Activated CD4-positive, alpha-beta memory T cell treated with anti-CD3 and anti-CD28 coated beads for 36 hours (primary cell): ENCODE measurements at regions of chr17 and their contacts with region 1.

Region 1: DNA sequence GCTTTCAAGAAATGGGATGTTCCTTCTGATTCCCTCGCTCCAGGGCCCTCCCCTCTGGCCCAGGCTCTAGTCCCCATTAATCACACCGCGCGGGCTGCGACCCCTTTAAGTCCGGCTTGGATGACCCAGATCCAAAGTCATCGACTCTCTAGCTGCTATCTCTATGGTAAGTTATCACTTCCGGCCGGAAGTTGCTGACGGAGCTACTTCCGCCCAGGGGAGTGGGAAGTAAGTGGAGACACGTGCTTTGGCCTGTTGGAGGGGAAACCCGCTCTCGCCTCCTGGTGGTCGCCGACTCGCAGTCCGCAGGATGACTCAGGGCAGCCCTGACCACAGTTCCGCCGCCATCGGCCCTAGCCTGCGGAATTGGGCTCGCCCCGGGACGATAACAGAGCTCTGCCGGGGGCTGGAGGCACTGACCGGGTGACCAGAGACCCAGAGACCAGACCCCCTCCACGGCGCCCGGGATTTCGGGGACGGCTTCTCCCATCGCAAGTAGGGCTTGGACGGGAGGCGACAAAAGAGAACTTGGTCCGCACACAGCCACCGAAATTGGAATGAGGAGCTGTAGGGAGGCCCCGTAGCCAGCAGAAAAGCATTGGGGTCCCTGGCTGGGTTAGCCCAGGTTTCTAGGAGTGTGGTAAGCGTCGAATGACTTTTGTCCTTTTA is 52.2 kb upstream of the SEC14L1 start:
- DNase-seq: peak; percentile 92
- H3K4me3 Mint-ChIP-seq: peak overlapping the region; percentile 89
- H3K27ac Mint-ChIP-seq: peak overlapping the region; percentile 94
- H3K4me1 Mint-ChIP-seq: peaks cover 53% of the 10 kb centered on the region
- H3K27me3 Mint-ChIP-seq: no peaks in the 10 kb centered on the region

Region 2: GRCh38 chr17:77127735-77128361 is 39.3 kb after region 1 on chr17:
- CTCF ChIA-PET with region 1: interaction called, 5 read pairs
- POLR2A ChIA-PET with region 1: interaction called, 6 read pairs
- intact Hi-C with region 1: loop called (anchors 1 kb)
- DNase-seq: peak; percentile 87
- H3K4me3 Mint-ChIP-seq: peak overlapping the region; percentile 55
- H3K27ac Mint-ChIP-seq: peak overlapping the region; percentile 91
- H3K4me1 Mint-ChIP-seq: peaks cover 28% of the 10 kb centered on the region
- H3K27me3 Mint-ChIP-seq: no peaks in the 10 kb centered on the region

Region 3: GRCh38 chr17:77186141-77186604 is 97.6 kb after region 1 on chr17:
- CTCF ChIA-PET with region 1: interaction called, 5 read pairs
- POLR2A ChIA-PET with region 1: no interaction called
- intact Hi-C with region 1: loop called (anchors 5 kb)
- DNase-seq: peak; percentile 34
- H3K4me3 Mint-ChIP-seq: no peak overlapping the region
- H3K27ac Mint-ChIP-seq: no peak overlapping the region
- H3K4me1 Mint-ChIP-seq: peaks cover 48% of the 10 kb centered on the region
- H3K27me3 Mint-ChIP-seq: no peaks in the 10 kb centered on the region

Region 4: DNA sequence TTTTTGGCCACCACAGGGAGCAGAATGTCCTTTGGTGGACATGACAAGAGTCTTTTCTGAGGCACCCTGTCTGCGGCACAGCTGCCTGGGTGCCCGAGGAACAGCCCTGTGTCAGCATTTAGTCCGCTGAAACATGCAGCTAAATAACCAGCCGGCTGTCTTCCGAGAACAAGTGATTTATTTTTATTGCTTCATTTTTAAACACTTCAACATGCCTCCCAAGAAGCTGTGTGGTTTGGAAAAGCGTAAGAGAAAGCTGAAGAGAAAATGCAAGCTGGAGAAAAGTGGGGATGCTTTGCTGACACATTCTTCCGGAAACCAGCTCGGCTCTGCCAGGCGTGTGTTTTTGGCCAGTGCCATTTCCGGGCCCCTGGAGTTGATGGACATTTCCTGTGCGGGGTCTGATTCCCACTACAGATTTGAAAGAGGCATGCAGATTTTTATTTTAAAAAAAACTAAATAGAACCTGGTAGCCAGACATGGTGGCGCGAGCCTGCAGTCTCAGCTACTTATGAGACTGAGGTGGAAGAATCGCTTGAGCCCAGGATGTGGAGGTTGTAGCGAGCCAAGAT is 146.9 kb after region 1 on chr17:
- CTCF ChIA-PET with region 1: interaction called, 18 read pairs
- POLR2A ChIA-PET with region 1: interaction called, 4 read pairs
- intact Hi-C with region 1: no loop called
- DNase-seq: peak; percentile 66
- H3K4me3 Mint-ChIP-seq: peak overlapping the region; percentile 59
- H3K27ac Mint-ChIP-seq: peak overlapping the region; percentile 66
- H3K4me1 Mint-ChIP-seq: peaks cover 19% of the 10 kb centered on the region
- H3K27me3 Mint-ChIP-seq: no peaks in the 10 kb centered on the region

Region 5: GRCh38 chr17:77247048-77247541 is 158.5 kb after region 1 on chr17:
- CTCF ChIA-PET with region 1: interaction called, 38 read pairs
- POLR2A ChIA-PET with region 1: no interaction called
- intact Hi-C with region 1: loop called (anchors 1 kb)
- DNase-seq: peak; percentile 88
- H3K4me3 Mint-ChIP-seq: peak overlapping the region; percentile 50
- H3K27ac Mint-ChIP-seq: no peak overlapping the region
- H3K4me1 Mint-ChIP-seq: peaks cover 9% of the 10 kb centered on the region
- H3K27me3 Mint-ChIP-seq: peaks cover 14% of the 10 kb centered on the region

Region 6: DNA sequence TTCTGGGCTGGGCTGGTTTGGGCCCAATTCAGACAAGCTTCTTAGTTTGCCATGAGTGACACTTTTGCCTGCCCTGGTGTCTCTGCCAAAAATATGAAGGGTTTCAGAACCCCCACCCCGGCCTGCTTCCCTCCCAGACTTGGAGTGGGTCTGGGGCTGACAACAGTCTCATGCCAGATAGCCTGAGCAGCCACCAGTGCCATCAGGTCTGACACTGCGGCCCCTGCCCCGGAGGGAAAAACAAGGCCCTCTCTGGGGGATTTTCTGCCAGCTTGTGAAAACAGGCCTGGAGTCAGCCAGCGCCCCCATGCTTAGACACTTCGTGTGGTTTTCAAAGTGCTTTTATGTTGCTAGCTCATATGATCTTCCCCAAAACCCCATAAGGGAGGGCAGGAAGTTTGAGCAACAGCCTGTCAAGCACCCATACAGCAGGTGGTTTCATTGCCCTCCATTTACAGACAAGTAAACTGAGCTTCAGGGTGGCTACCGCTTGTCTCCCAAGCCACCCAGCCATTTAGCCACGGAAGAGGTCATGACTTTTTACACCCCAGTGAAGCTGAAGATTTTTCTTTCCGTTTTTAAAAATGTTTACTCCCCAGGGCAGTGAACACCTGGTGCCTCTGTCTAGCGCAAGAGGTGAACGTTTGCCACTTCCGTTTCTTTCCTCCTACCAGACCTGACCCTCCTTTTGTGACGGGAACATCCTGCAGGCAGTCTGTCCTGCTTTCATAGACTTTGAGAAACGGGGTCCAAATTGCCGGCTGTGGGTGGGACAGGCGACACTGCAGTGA is 352.7 kb after region 1 on chr17:
- CTCF ChIA-PET with region 1: no interaction called
- POLR2A ChIA-PET with region 1: no interaction called
- intact Hi-C with region 1: no loop called
- DNase-seq: peak; percentile 85
- H3K4me3 Mint-ChIP-seq: peak overlapping the region; percentile 65
- H3K27ac Mint-ChIP-seq: peak overlapping the region; percentile 98
- H3K4me1 Mint-ChIP-seq: peaks cover 97% of the 10 kb centered on the region
- H3K27me3 Mint-ChIP-seq: no peaks in the 10 kb centered on the region